Thyroid gland (tissue), 4 donors: ENCODE measurements at regions of chr2 and their contacts with region 1.

Region 1: GRCh38 chr2:84424152-84424551 is 34.9 kb downstream of the SUCLG1 start:
- DNase-seq: no peak
- H3K4me3 ChIP-seq: no peak overlapping the region
- H3K27ac ChIP-seq: no peak overlapping the region
- H3K4me1 ChIP-seq: peaks cover 0 to 7% of the 10 kb centered on the region in 2 donors
- H3K27me3 ChIP-seq: no peaks in the 10 kb centered on the region
- CTCF ChIP-seq: peak in 4 of 6 experiments; percentile 26 to 67 (median 57)
- POLR2A ChIP-seq: no peak

Region 2: GRCh38 chr2:84022810-84023431 is 401.2 kb before region 1 on chr2:
- intact Hi-C with region 1: loop called (anchors 10 kb)
- DNase-seq: peak; percentile 4
- H3K4me3 ChIP-seq: no peak overlapping the region
- H3K27ac ChIP-seq: no peak overlapping the region
- H3K4me1 ChIP-seq: no peaks in the 10 kb centered on the region
- H3K27me3 ChIP-seq: no peaks in the 10 kb centered on the region
- CTCF ChIP-seq: peak in 4 of 6 experiments; percentile 16 to 57 (median 44)
- POLR2A ChIP-seq: no peak